CD8-positive, alpha-beta memory T cell (primary cell): ENCODE measurements at regions of chr5 and their contacts with region 1.

Region 1: DNA sequence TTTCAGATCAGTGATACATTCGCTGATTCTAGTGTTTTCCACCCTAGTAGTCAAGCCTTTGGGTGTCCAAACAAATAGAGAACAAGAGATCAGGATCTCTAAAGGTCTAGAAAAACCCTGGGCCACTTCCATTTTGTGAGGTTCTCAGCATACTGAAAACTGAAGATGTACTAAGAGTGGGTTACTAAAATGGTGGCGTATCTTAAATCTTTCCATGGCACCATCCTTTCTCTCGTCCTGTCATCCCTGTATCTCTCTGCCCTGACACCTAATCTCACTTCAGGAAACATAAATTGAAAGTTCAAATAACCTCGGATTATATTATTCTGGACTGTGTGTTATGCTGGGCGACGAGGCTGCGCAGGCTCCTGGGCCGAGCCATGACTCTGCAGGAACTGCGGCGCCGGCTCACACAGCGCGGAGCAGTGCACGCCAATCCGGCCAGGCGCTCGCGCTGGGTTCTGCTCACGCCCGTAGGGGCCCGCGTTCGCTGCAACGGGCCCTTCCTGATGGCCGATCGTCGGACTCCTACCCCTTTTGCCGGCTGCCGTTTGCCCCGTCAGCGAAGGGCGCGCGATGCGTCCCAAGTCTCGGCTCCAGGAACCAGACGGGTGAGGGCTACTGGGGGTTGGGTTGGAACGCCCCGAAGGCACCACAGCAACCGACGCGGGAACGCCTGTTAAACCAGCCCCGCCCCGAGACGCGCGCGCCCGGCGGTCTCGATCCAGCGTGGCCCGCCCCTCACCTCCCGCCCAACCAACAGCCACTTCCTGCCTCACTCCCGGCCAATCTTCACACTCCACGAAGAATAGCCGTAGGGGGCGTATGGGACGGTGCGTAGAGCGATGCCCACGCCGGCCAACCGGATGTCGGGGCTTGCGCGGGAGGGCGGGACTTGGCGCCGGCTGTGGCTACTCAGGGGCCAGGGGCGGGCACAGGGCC is 503 bp upstream of the CANX start:
- DNase-seq: peak; percentile 97 to 99 (median 99)
- H3K4me3 ChIP-seq: peak overlapping the region; percentile 90
- H3K4me3 Mint-ChIP-seq: peak overlapping the region; percentile 95 to 99 (median 96)
- H3K27ac ChIP-seq: peak overlapping the region; percentile 97
- H3K27ac Mint-ChIP-seq: peak overlapping the region; percentile 98 to 100 (median 99)
- H3K4me1 ChIP-seq: peaks cover 37% of the 10 kb centered on the region
- H3K4me1 Mint-ChIP-seq: peaks cover 34 to 55% (median 55%) of the 10 kb centered on the region in 3 donors
- H3K27me3 ChIP-seq: no peaks in the 10 kb centered on the region
- H3K27me3 Mint-ChIP-seq: no peaks in the 10 kb centered on the region

Region 2: GRCh38 chr5:179643556-179643955 is 54.7 kb before region 1 on chr5:
- CTCF ChIA-PET with region 1: no interaction called
- POLR2A ChIA-PET with region 1: no interaction called
- DNase-seq: no peak
- H3K4me3 ChIP-seq: no peak overlapping the region
- H3K4me3 Mint-ChIP-seq: no peak overlapping the region
- H3K27ac ChIP-seq: no peak overlapping the region
- H3K27ac Mint-ChIP-seq: no peak overlapping the region
- H3K4me1 ChIP-seq: no peaks in the 10 kb centered on the region
- H3K4me1 Mint-ChIP-seq: no peaks in the 10 kb centered on the region
- H3K27me3 ChIP-seq: no peaks in the 10 kb centered on the region
- H3K27me3 Mint-ChIP-seq: peaks cover 0 to 4% of the 10 kb centered on the region in 2 donors

Region 3: GRCh38 chr5:179668391-179668790 is 29.9 kb before region 1 on chr5:
- CTCF ChIA-PET with region 1: no interaction called
- POLR2A ChIA-PET with region 1: no interaction called
- DNase-seq: peak; percentile 30 to 62 (median 37)
- H3K4me3 ChIP-seq: no peak overlapping the region
- H3K4me3 Mint-ChIP-seq: no peak overlapping the region
- H3K27ac ChIP-seq: no peak overlapping the region
- H3K27ac Mint-ChIP-seq: no peak overlapping the region
- H3K4me1 ChIP-seq: no peaks in the 10 kb centered on the region
- H3K4me1 Mint-ChIP-seq: peaks cover 0 to 1% (median 0%) of the 10 kb centered on the region in 3 donors
- H3K27me3 ChIP-seq: no peaks in the 10 kb centered on the region
- H3K27me3 Mint-ChIP-seq: no peaks in the 10 kb centered on the region

Region 4: GRCh38 chr5:179678223-179679013 is 19.8 kb before region 1 on chr5:
- CTCF ChIA-PET with region 1: interaction called, 15 read pairs
- POLR2A ChIA-PET with region 1: interaction called, 16 read pairs
- DNase-seq: peak; percentile 89 to 94 (median 93)
- H3K4me3 ChIP-seq: peak overlapping the region; percentile 97
- H3K4me3 Mint-ChIP-seq: peak overlapping the region; percentile 88 to 99 (median 96)
- H3K27ac ChIP-seq: peak overlapping the region; percentile 91
- H3K27ac Mint-ChIP-seq: peak overlapping the region; percentile 87 to 98 (median 97)
- H3K4me1 ChIP-seq: peaks cover 14% of the 10 kb centered on the region
- H3K4me1 Mint-ChIP-seq: peaks cover 25 to 41% (median 27%) of the 10 kb centered on the region in 3 donors
- H3K27me3 ChIP-seq: no peaks in the 10 kb centered on the region
- H3K27me3 Mint-ChIP-seq: no peaks in the 10 kb centered on the region

Region 5: DNA sequence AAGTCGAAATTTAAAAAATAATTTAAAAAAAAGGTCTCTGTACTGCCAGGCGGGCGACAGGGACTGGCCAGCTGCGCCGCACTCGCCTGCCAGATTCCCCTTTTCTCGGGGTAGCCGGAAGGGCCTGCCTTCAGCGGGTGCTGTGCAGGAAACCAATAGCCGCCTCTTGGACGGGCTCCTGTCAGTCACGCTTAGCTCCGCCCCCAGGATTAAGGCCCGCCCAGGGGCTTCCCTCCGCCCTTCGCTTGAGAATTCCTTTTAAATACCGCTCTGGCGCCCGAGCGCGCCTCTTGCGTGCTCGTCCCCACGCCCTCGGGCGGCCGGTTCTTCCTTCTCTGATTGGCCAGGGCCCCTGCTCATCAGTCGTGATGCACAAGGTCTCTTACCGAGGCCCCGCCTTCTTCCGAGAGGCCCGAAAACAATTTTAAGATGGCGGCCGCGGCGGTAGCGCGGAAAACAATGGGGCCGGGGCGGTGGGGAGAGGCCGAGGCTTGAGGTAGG is 34.2 kb after region 1 on chr5 and contains the start of gene MAML1:
- CTCF ChIA-PET with region 1: no interaction called
- POLR2A ChIA-PET with region 1: interaction called, 35 read pairs
- DNase-seq: peak; percentile 99 to 100 (median 99)
- H3K4me3 ChIP-seq: peak within 1 kb of the TSS; percentile 75
- H3K4me3 Mint-ChIP-seq: peak within 1 kb of the TSS; percentile 92 to 99 (median 95)
- H3K27ac ChIP-seq: peak within 1 kb of the TSS; percentile 89
- H3K27ac Mint-ChIP-seq: peak within 1 kb of the TSS; percentile 94 to 98 (median 96)
- H3K4me1 ChIP-seq: peaks cover 34% of the 10 kb centered on the region
- H3K4me1 Mint-ChIP-seq: peaks cover 35 to 49% (median 46%) of the 10 kb centered on the region in 3 donors
- H3K27me3 ChIP-seq: no peaks in the 10 kb centered on the region
- H3K27me3 Mint-ChIP-seq: no peaks in the 10 kb centered on the region
- total RNA-seq, gene MAML1: 30.4 to 30.9 TPM